A549 (cell line): ENCODE measurements at regions of chr9 and their contacts with region 1.

Region 1: GRCh38 chr9:17052626-17053025 is 82.2 kb upstream of the CNTLN start:
- DNase-seq: no peak
- ATAC-seq: no peak; a peak in 1 of 6 replicates
- H3K4me3 ChIP-seq: no peak overlapping the region
- H3K27ac ChIP-seq: no peak overlapping the region
- H3K4me1 ChIP-seq: no peaks in the 10 kb centered on the region
- CTCF ChIP-seq: no peak
- EP300 ChIP-seq: no peak
- POLR2A ChIP-seq: no peak
- RAD21 ChIP-seq: no peak

Region 2: DNA sequence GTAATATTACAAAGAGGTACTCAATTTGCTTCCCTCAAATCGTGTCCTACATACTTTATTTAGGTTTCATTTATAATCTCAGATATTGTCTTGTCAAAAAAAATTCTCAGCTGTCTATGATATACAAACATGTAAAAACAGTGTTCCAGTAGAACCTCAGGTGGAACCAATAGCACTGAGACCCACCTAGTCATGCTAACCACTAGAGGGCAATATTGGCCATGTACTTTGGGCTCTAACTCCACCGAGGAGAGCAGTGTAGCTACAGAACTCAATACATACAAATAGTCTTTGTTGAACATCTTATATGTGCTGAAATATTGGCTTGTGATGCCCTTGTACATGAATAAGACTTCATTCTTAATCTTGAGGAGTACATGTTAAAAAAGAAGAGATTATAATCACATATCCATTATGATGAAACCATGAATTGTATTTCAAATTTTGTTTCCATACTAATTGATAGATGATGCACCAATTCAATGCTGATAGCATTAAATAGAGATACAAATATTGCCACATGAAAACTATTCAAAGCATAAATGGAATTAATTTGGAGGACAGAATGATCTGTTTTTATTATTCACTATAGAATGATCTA is 11.0 kb after region 1 on chr9:
- CTCF ChIA-PET with region 1: interaction called, 17 read pairs
- POLR2A ChIA-PET with region 1: no interaction called
- DNase-seq: peak; percentile 23 to 69
- ATAC-seq: peak; percentile 98
- H3K4me3 ChIP-seq: no peak overlapping the region
- H3K27ac ChIP-seq: no peak overlapping the region
- H3K4me1 ChIP-seq: peaks cover 13% of the 10 kb centered on the region
- CTCF ChIP-seq: peak; percentile 76
- EP300 ChIP-seq: no peak
- POLR2A ChIP-seq: no peak
- RAD21 ChIP-seq: peak; percentile 68 to 78

Region 3: GRCh38 chr9:17075758-17076485 is 23.3 kb after region 1 on chr9:
- CTCF ChIA-PET with region 1: no interaction called
- POLR2A ChIA-PET with region 1: no interaction called
- DNase-seq: no peak
- ATAC-seq: 0 out of 6 replicates have a peak, but pooled peaks of 1 of the 2 experiments have one; percentile 19
- H3K4me3 ChIP-seq: no peak overlapping the region
- H3K27ac ChIP-seq: no peak overlapping the region
- H3K4me1 ChIP-seq: no peaks in the 10 kb centered on the region
- CTCF ChIP-seq: no peak
- EP300 ChIP-seq: no peak
- POLR2A ChIP-seq: no peak
- RAD21 ChIP-seq: no peak

Region 4: DNA sequence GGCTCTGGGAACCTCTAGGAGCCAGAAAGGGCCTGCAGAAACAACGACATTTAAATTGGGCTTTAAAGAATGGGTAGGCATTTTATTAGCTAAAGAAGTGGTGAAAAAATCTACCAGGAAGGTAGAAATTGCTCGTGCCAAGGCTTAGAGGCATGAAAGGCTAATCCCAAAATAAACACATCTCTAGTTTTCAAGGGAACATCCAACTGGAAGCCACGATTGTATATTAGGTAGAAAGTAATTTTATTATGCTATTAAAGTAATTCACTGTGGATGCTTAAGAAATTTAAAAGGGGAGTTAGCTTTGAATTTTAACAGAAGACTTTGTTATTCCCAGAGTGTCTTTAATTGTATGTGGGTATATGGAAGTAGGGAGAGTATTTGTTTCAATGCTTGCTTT is 64.7 kb after region 1 on chr9:
- CTCF ChIA-PET with region 1: no interaction called
- POLR2A ChIA-PET with region 1: no interaction called
- DNase-seq: no peak
- ATAC-seq: no peak
- H3K4me3 ChIP-seq: no peak overlapping the region
- H3K27ac ChIP-seq: no peak overlapping the region
- H3K4me1 ChIP-seq: no peaks in the 10 kb centered on the region
- CTCF ChIP-seq: no peak
- EP300 ChIP-seq: no peak
- POLR2A ChIP-seq: no peak
- RAD21 ChIP-seq: no peak